ENCODE measurements at regions of chr2 and their contacts with region 1.

Region 1: DNA sequence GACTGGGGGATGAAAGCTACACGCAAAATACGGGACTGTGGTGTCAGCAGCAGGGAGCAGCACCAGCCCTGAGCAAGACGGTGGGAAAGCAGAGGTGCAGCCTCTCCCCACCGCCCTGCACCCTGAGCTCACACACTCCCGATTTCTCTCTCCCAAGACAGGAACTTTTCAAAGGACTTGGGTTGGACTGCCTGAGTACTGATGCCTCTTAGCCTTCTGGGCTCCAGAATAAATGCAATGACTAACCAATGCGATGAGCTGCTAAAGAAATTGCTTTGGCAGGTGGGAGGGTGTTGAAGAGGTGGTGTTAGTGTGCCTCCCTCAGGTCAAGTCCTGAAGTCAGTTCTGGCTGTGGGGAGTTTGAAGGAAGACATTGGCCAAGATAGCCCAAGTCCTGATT is 9.6 kb downstream of the TRIM54 start:
- DNase-seq: peak in 1 of 2 donors; percentile 67
- ATAC-seq: peak; percentile 66 to 82
- H3K4me3 ChIP-seq: peak overlapping the region; percentile 42 to 84 (median 66)
- H3K27ac ChIP-seq: peak overlapping the region; percentile 88 to 99 (median 98)
- H3K4me1 ChIP-seq: peaks cover 88 to 97% of the 10 kb centered on the region in 2 donors
- H3K27me3 ChIP-seq: no peaks in the 10 kb centered on the region
- CTCF ChIP-seq: peak in 3 of 5 experiments; percentile 11 to 50 (median 16)
- POLR2A ChIP-seq: peak in 1 of 2 donors; percentile 59

Region 2: DNA sequence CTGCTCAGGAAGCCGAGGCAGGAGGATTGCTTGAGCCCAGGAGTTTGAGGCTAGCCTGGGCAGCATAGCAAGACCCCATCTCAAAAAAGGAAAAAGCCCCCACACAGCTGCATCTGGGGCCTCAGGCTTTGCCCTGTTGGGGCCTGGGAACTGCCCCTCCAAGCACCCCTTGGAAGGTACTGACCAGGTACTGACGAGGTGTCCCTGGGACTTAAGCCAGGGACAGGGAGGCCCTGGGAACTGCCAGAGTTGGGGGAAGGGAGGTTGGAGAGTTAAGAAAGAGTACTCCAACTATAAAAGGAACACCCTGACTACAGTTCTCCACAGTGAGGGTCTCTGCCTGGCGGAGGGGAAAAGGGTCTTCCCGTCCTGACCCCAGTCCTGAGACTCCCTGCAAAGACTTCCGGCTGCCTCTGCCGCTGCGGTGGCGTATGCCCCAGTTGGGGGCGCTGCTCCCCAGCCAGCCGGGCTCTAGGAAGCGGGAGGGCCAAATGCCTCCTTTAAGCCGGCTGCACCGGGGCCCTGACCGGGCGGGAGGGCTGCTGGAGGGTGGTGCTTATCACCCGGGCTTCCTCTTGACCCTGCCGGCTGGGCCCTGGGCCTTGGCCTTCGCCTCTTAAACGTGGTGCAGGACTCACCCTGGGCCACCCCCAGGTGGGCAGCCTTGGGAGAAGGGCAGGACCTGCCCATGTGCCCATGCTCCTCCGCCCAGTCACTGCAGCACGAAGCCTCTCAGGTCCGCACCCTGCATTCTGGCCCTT is 41.8 kb before region 1 on chr2:
- in situ Hi-C with region 1: no loop called
- intact Hi-C with region 1: loop called (anchors 1 kb)
- DNase-seq: peak in 1 of 2 donors; percentile 54
- ATAC-seq: peak; percentile 30 to 82
- H3K4me3 ChIP-seq: no peak overlapping the region
- H3K27ac ChIP-seq: no peak overlapping the region
- H3K4me1 ChIP-seq: peaks cover 7% of the 10 kb centered on the region in 2 donors
- H3K27me3 ChIP-seq: no peaks in the 10 kb centered on the region
- CTCF ChIP-seq: peak; percentile 67 to 84 (median 79)
- POLR2A ChIP-seq: no peak

Region 3: GRCh38 chr2:27271631-27272340 is 20.1 kb before region 1 on chr2:
- in situ Hi-C with region 1: no loop called
- intact Hi-C with region 1: no loop called
- DNase-seq: no peak
- ATAC-seq: no peak
- H3K4me3 ChIP-seq: no peak overlapping the region
- H3K27ac ChIP-seq: no peak overlapping the region
- H3K4me1 ChIP-seq: no peaks in the 10 kb centered on the region
- H3K27me3 ChIP-seq: peaks cover 0 to 5% (median 3%) of the 10 kb centered on the region in 3 donors
- CTCF ChIP-seq: no peak
- POLR2A ChIP-seq: no peak

Region 4: DNA sequence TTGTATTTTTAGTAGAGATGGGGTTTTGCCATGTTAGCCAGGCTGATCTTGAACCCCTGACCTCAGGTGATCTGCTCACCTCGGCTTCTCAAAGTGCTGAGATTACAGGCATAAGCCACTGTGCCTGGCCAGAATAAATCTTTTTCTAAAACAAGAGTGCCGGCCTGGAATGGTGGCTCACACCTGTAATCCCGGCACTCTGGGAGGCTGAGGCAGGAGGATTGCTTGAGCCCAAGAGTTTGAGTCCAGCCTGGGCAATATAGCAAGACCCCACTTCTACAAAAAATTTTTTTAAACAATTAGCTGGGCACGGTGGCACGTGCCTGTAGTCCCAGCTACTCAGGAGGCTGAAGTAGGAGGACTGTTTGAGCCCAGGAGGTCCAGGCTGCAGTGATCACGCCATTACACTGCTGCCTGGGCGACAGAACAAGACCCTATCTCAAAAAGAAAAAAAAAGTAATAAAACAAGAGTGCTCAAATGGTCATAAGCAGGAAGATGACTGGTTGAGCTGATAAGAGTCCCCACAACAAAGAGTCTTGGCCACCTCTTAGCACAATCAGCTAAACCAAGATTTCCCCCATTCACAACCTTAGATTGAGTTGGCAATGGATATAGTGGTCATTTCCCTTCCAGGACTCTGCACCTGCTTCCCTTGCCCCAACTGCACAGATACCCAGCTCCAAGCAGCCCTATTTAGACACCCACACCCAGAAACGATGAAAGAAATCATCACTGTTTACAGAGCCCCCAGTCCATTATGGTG is 22.2 kb after region 1 on chr2:
- in situ Hi-C with region 1: no loop called
- intact Hi-C with region 1: loop called (anchors 2 kb)
- DNase-seq: no peak
- ATAC-seq: peak; percentile 1 to 6
- H3K4me3 ChIP-seq: no peak overlapping the region
- H3K27ac ChIP-seq: peak overlapping the region; percentile 44 to 61 (median 48)
- H3K4me1 ChIP-seq: peaks cover 19 to 20% of the 10 kb centered on the region in 2 donors
- H3K27me3 ChIP-seq: no peaks in the 10 kb centered on the region
- CTCF ChIP-seq: no peak
- POLR2A ChIP-seq: peak in 1 of 2 donors; percentile 31

Region 5: DNA sequence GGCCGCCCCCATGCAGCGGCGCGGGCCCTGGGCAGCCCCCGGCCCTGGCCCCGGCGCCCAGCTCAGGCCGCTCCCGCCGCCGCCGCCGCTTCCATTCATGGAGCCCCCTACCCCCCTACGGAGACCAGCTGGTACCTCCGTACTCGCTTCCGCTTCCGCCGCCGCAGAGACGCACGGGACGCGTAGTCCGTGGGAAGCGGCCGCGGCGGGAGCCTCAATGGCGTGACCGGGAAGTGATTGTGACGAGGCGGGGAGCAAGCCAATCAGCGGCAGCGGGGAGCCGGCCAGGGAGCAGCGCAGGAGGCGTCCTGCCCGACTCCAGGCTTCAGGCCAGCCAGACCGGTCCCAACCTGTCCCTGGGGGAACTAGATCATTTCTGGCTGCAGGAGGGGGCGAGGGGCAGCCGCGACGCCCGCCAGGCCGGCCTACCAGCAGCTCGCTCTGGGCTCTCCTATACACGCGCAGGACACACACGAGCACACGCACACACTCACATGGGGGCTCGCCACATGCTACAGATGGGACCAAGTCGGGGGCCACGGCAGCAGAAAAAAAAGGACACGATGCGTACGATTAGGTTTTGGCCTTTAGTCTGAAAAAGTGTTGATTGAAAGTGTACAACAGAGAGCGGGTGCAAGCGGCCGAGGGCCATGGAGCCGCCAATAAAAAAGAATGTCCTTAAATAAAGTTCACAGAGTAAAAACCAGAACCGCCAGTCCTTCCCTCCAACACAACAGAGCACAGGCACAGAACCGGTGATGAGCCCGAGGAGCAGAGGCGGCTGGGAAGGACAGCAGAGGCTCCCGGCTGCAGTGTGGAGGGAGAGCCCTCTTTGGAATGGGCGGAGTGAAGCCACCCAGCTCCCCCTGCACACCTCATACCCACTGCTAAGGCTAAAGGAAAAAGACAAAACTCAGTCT is 89.0 kb after region 1 on chr2 and contains the start of gene ZNF513:
- in situ Hi-C with region 1: no loop called
- intact Hi-C with region 1: no loop called
- DNase-seq: peak; percentile 96 to 97
- ATAC-seq: peak; percentile 95
- H3K4me3 ChIP-seq: peak within 1 kb of the TSS; percentile 59 to 77 (median 70)
- H3K27ac ChIP-seq: peak within 1 kb of the TSS; percentile 84 to 91 (median 88)
- H3K4me1 ChIP-seq: peaks cover 18 to 19% of the 10 kb centered on the region in 2 donors
- H3K27me3 ChIP-seq: no peaks in the 10 kb centered on the region
- CTCF ChIP-seq: no peak
- POLR2A ChIP-seq: peak; percentile 63 to 68
- total RNA-seq, gene ZNF513: 2.0 to 7.6 (median 4.5) TPM

Measured in gastrocnemius medialis (tissue), 4 donors.